ENCODE measurements at regions of chr19 and their contacts with region 1.

Region 1: GRCh38 chr19:47190167-47190727 is 40.8 kb downstream of the BBC3 start:
- DNase-seq: peak; percentile 79
- H3K4me3 ChIP-seq: peak overlapping the region in 1 of 4 donors; percentile 34
- H3K27ac ChIP-seq: peak overlapping the region; percentile 87 to 92 (median 88)
- H3K4me1 ChIP-seq: peaks cover 35 to 59% (median 55%) of the 10 kb centered on the region in 4 donors
- H3K27me3 ChIP-seq: no peaks in the 10 kb centered on the region
- CTCF ChIP-seq: no peak
- EP300 ChIP-seq: no peak
- POLR2A ChIP-seq: peak; percentile 60

Region 2: GRCh38 chr19:46850228-46851203 is 339.7 kb before region 1 on chr19 and contains the start of gene AP2S1:
- in situ Hi-C with region 1: no loop called
- intact Hi-C with region 1: no loop called
- DNase-seq: peak; percentile 97
- H3K4me3 ChIP-seq: peak within 1 kb of the TSS; percentile 67 to 86 (median 83)
- H3K27ac ChIP-seq: peak within 1 kb of the TSS; percentile 88 to 94 (median 90)
- H3K4me1 ChIP-seq: peaks cover 12 to 46% (median 19%) of the 10 kb centered on the region in 4 donors
- H3K27me3 ChIP-seq: no peaks in the 10 kb centered on the region
- CTCF ChIP-seq: no peak
- EP300 ChIP-seq: no peak
- POLR2A ChIP-seq: peak; percentile 85
- total RNA-seq, gene AP2S1: 50.1 to 96.9 (median 61.2) TPM

Region 3: GRCh38 chr19:47143322-47144073 is 46.7 kb before region 1 on chr19:
- in situ Hi-C with region 1: loop called in 1 of 4 experiments (anchors 10 kb)
- intact Hi-C with region 1: no loop called
- DNase-seq: peak; percentile 9
- H3K4me3 ChIP-seq: no peak overlapping the region
- H3K27ac ChIP-seq: peak overlapping the region; percentile 54 to 70 (median 64)
- H3K4me1 ChIP-seq: peaks cover 0 to 23% (median 6%) of the 10 kb centered on the region in 4 donors
- H3K27me3 ChIP-seq: no peaks in the 10 kb centered on the region
- CTCF ChIP-seq: no peak
- EP300 ChIP-seq: no peak
- POLR2A ChIP-seq: no peak

Region 4: GRCh38 chr19:47256688-47257443 is 66.6 kb after region 1 on chr19:
- in situ Hi-C with region 1: no loop called
- intact Hi-C with region 1: no loop called
- DNase-seq: peak; percentile 100
- H3K4me3 ChIP-seq: peak overlapping the region; percentile 43 to 62 (median 56)
- H3K27ac ChIP-seq: peak overlapping the region; percentile 89 to 93 (median 92)
- H3K4me1 ChIP-seq: peaks cover 15 to 26% (median 23%) of the 10 kb centered on the region in 4 donors
- H3K27me3 ChIP-seq: no peaks in the 10 kb centered on the region
- CTCF ChIP-seq: no peak
- EP300 ChIP-seq: no peak
- POLR2A ChIP-seq: no peak